ENCODE measurements at regions of chr20 and their contacts with region 1.

Region 1: GRCh38 chr20:24992487-24993205 is at the start of gene APMAP:
- DNase-seq: peak; percentile 92 to 99 (median 97)
- ATAC-seq: peak; percentile 89
- H3K4me3 ChIP-seq: peak within 1 kb of the TSS; percentile 91 to 99
- H3K4me3 Mint-ChIP-seq: peak within 1 kb of the TSS; percentile 95
- H3K27ac ChIP-seq: peak within 1 kb of the TSS; percentile 94 to 96
- H3K27ac Mint-ChIP-seq: peak within 1 kb of the TSS; percentile 97
- H3K4me1 ChIP-seq: peaks cover 45% of the 10 kb centered on the region
- H3K4me1 Mint-ChIP-seq: peaks cover 65% of the 10 kb centered on the region
- H3K27me3 ChIP-seq: no peaks in the 10 kb centered on the region
- H3K27me3 Mint-ChIP-seq: no peaks in the 10 kb centered on the region
- CTCF ChIP-seq: no peak
- total RNA-seq, gene APMAP: 31.0 to 31.8 TPM

Region 2: GRCh38 chr20:23350196-23350903 is 1642.3 kb before region 1 on chr20 and contains the start of gene NXT1:
- CTCF ChIA-PET with region 1: no interaction called
- POLR2A ChIA-PET with region 1: no interaction called
- intact Hi-C with region 1: loop called in 1 of 2 experiments (anchors 5 kb)
- DNase-seq: peak; percentile 92 to 98 (median 94)
- ATAC-seq: peak; percentile 77
- H3K4me3 ChIP-seq: peak within 1 kb of the TSS; percentile 89 to 97
- H3K4me3 Mint-ChIP-seq: peak within 1 kb of the TSS; percentile 80
- H3K27ac ChIP-seq: peak within 1 kb of the TSS; percentile 99
- H3K27ac Mint-ChIP-seq: peak within 1 kb of the TSS; percentile 100
- H3K4me1 ChIP-seq: peaks cover 21% of the 10 kb centered on the region
- H3K4me1 Mint-ChIP-seq: peaks cover 23% of the 10 kb centered on the region
- H3K27me3 ChIP-seq: no peaks in the 10 kb centered on the region
- H3K27me3 Mint-ChIP-seq: no peaks in the 10 kb centered on the region
- CTCF ChIP-seq: no peak
- total RNA-seq, gene NXT1: 52.4 to 52.5 TPM

Region 3: DNA sequence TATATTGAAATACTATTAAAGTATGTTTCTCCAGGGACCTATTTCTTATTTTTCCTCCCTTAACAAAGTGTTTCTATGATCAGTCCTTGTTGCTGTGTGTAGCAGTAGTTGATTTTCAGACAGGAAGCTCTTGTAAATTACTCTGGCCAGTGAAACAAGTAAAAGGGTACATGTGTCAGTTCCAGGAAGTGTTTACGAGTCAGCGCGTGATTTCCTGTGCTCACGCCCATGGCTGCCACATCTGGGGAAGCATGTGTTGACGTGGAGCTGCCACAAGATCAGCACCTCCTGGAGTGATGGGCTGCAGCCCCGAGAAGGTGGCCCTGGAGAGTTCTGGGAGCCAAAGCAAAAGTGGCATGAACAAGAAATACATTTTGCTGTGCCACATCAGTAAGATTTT is 965.4 kb before region 1 on chr20:
- CTCF ChIA-PET with region 1: no interaction called
- POLR2A ChIA-PET with region 1: no interaction called
- intact Hi-C with region 1: loop called in 1 of 2 experiments (anchors 5 kb)
- DNase-seq: peak; percentile 56 to 92 (median 78)
- ATAC-seq: peak; percentile 98
- H3K4me3 ChIP-seq: peak overlapping the region in 1 of 2 experiments; percentile 0
- H3K4me3 Mint-ChIP-seq: peak overlapping the region; percentile 62
- H3K27ac ChIP-seq: peak overlapping the region; percentile 82 to 94
- H3K27ac Mint-ChIP-seq: peak overlapping the region; percentile 97
- H3K4me1 ChIP-seq: peaks cover 26% of the 10 kb centered on the region
- H3K4me1 Mint-ChIP-seq: peaks cover 44% of the 10 kb centered on the region
- H3K27me3 ChIP-seq: no peaks in the 10 kb centered on the region
- H3K27me3 Mint-ChIP-seq: no peaks in the 10 kb centered on the region
- CTCF ChIP-seq: no peak

Region 4: DNA sequence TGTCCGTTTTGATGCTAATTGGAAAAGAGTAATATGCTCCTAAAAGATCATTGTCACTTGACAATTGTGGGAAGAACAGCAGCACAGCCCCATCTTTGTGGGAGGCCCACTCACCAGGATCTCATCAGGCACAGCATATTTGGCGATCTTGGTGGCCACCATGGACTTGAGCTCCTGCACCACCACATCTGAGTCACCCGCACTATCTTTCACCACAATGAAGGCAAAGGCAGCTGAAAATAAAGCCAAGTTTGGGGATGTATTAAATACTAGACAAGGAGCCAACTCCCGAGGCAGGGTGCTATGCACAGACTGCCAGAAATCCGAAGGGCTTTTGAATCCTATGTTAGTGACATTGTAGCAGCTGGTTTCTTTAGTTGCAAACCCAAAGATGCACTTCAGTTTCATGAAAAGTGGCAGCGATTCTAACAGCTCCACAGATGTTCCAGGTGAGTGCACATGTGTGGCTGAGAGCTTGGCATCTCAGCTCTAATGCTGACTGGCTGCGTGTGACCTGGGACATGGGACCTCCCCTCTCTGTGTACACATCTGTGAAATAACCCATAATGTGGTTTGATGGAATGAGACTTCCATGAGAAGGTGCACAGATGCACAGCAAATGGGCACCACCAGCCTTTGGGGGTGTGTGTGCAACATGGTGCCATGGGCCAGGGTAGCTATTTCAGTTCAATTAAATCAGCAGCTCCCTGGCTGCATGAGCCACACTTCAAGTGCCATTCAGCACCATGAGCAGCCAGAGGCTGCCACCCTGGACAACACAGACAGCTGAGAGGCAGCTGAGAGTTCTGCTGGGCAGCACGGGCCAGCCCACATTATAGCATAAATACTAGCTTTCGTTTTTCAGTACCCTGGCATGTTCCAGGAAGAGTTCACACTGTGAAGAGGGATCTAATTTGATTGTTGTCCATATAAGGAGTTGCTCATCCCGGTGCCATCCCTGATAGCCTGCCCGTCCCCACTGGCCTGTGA is 16.8 kb after region 1 on chr20:
- CTCF ChIA-PET with region 1: interaction called, 33 read pairs
- POLR2A ChIA-PET with region 1: interaction called, 3 read pairs
- intact Hi-C with region 1: no loop called
- DNase-seq: no peak
- ATAC-seq: no peak
- H3K4me3 ChIP-seq: no peak overlapping the region
- H3K4me3 Mint-ChIP-seq: no peak overlapping the region
- H3K27ac ChIP-seq: no peak overlapping the region
- H3K27ac Mint-ChIP-seq: no peak overlapping the region
- H3K4me1 ChIP-seq: no peaks in the 10 kb centered on the region
- H3K4me1 Mint-ChIP-seq: no peaks in the 10 kb centered on the region
- H3K27me3 ChIP-seq: no peaks in the 10 kb centered on the region
- H3K27me3 Mint-ChIP-seq: no peaks in the 10 kb centered on the region
- CTCF ChIP-seq: no peak

Region 5: DNA sequence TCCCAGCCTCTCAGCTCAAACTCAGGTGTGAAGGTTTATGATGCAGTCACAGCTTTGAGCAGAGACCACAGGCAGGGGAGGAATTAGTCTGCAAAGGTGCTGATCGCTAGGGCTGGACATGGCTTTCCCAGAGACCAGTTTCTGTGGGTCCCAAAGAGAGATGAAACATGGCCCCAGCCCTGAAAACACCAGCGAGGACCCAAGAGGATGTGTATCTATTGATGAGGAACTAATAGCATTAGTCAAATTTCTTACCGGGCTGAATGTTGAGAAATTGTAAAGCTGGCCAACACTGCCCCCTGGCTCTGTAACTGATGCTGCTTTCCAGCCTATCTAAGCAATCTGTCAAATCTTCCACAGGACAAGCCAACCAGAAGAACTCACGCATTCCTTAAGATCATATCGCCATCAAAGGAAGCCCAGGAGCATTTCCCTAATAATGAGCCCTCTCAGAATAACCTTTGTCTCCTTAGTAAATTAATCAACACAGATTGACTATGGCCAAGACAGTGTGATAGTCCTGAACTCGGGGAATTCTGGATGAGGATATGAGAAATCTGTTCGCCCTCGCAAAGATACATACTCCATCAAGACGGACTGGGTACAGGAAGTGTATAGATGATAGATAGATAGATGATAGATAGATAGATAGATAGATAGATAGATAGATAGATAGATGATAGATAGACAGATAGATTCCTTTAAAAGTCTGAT is 73.1 kb after region 1 on chr20:
- CTCF ChIA-PET with region 1: interaction called, 274 read pairs
- POLR2A ChIA-PET with region 1: interaction called, 8 read pairs
- intact Hi-C with region 1: loop called (anchors 1 kb)
- DNase-seq: peak; percentile 45 to 83 (median 69)
- ATAC-seq: peak; percentile 83
- H3K4me3 ChIP-seq: no peak overlapping the region
- H3K4me3 Mint-ChIP-seq: no peak overlapping the region
- H3K27ac ChIP-seq: no peak overlapping the region
- H3K27ac Mint-ChIP-seq: no peak overlapping the region
- H3K4me1 ChIP-seq: peaks cover 3% of the 10 kb centered on the region
- H3K4me1 Mint-ChIP-seq: peaks cover 8% of the 10 kb centered on the region
- H3K27me3 ChIP-seq: peaks cover 0 to 13% of the 10 kb centered on the region in 2 experiments
- H3K27me3 Mint-ChIP-seq: peaks cover 18% of the 10 kb centered on the region
- CTCF ChIP-seq: peak; percentile 75

Region 6: DNA sequence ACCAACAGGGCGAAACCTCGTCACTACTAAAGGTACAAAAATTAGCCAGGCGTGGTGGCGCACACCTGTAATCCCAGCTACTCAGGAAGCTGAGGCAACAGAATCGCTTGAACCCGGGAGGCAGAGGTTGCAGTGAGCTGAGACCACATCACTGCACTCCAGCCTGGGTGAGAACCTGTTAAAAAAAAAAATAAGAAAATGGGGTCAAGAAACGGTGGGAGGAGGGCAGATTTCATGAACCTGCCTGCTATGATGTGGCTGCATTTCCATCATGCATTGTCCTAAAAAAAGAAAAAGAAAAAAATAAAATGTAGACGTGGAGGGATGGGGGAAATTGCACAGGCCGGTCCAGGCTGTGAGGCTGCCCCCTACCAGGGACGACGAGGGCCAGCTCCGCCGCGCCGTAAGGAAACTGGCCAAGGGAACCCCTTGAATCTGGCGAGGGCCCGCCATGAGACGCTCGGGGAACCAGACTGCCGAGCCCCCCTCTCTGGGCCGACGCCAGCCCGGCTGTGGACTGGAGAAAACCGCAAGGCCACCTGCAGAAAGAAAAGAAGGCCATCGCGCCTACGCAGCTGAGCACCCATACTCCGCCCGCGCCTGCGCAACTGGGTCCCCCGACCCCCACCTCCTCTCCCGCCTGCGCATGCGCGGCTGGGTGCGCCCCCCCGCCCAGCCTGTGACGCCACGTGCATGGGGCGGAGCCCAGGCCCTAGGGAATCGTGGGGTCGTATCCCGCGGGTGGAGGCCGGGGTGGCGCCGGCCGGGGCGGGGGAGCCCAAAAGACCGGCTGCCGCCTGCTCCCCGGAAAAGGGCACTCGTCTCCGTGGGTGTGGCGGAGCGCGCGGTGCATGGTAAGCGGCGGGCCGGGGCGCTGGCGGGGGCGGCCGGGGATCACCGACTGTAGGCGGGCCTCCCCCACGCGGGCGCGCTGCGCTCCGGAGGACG is 202.6 kb after region 1 on chr20 and contains the start of gene ENTPD6:
- CTCF ChIA-PET with region 1: no interaction called
- POLR2A ChIA-PET with region 1: interaction called, 5 read pairs
- intact Hi-C with region 1: loop called (anchors 1 to 5 kb)
- DNase-seq: peak; percentile 86 to 98 (median 94)
- ATAC-seq: peak; percentile 79
- H3K4me3 ChIP-seq: peak within 1 kb of the TSS; percentile 87 to 94
- H3K4me3 Mint-ChIP-seq: peak within 1 kb of the TSS; percentile 88
- H3K27ac ChIP-seq: peak within 1 kb of the TSS; percentile 90 to 95
- H3K27ac Mint-ChIP-seq: peak within 1 kb of the TSS; percentile 95
- H3K4me1 ChIP-seq: peaks cover 29% of the 10 kb centered on the region
- H3K4me1 Mint-ChIP-seq: peaks cover 49% of the 10 kb centered on the region
- H3K27me3 ChIP-seq: no peaks in the 10 kb centered on the region
- H3K27me3 Mint-ChIP-seq: no peaks in the 10 kb centered on the region
- CTCF ChIP-seq: no peak
- total RNA-seq, gene ENTPD6: 62.4 to 70.1 TPM

Region 7: DNA sequence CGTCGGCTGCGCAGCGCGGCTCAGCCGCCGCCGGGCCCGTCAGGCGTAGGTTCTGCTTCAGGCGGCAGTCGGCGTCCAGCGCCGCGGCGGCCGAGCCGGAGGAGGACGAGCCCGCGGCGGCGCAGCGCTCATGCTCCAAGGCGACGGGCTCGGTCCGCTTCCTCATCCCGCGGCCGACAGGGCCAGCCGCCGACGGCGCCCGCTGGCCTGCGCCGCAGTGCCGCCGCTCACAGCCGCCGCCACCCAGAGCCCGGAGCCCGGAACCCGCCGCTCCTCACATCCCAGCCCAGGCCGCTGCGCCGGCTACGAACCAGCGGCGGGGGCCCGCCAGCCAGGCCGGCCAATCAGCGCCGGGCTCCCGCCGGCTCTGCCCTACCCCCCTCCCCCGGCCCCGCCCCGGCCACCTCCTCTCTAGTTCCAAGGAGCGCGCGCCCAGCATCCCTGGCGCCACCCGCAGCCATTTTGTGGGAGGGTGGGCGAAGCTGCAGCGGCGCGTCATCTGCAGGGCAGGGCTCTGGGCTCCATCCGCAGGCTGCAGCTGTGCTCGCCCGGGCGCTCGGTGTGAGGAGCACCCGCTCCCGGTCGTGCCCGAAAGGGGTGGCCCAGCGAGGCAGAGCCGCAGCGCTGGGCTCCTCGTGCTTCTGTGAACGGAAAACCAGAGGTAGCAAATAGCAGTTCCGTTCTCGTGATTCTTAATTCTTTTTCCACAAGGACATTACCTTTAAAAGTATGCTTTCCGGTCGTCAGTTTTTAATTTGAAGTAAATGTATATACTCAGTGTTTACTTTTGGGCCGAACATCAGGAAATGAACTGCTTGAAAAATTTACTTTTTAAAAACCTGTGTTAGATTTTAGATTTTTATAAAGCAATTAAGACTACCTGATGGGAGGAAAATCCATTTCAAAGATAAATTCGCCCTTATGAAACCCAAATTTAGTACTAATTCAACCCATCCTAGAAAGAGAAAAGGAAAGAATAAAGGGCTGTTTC is 398.2 kb after region 1 on chr20 and contains the start of gene ABHD12:
- CTCF ChIA-PET with region 1: no interaction called
- POLR2A ChIA-PET with region 1: no interaction called
- intact Hi-C with region 1: loop called (anchors 1 to 2 kb)
- DNase-seq: peak; percentile 88 to 96 (median 92)
- ATAC-seq: peak; percentile 91
- H3K4me3 ChIP-seq: peak within 1 kb of the TSS; percentile 55 to 70
- H3K4me3 Mint-ChIP-seq: peak within 1 kb of the TSS; percentile 85
- H3K27ac ChIP-seq: peak within 1 kb of the TSS; percentile 47 to 51
- H3K27ac Mint-ChIP-seq: peak within 1 kb of the TSS; percentile 84
- H3K4me1 ChIP-seq: peaks cover 5% of the 10 kb centered on the region
- H3K4me1 Mint-ChIP-seq: peaks cover 20% of the 10 kb centered on the region
- H3K27me3 ChIP-seq: no peaks in the 10 kb centered on the region
- H3K27me3 Mint-ChIP-seq: no peaks in the 10 kb centered on the region
- CTCF ChIP-seq: no peak
- total RNA-seq, gene ABHD12: 14.1 to 17.9 TPM

Measured in CD8-positive, alpha-beta T cell (primary cell).